Esophagus muscularis mucosa (tissue), 4 donors: ENCODE measurements at regions of chr4 and their contacts with region 1.

Region 1: GRCh38 chr4:159175085-159175988 is 72.5 kb downstream of the RAPGEF2 start:
- DNase-seq: no peak
- H3K4me3 ChIP-seq: peak overlapping the region in 3 of 4 donors; percentile 16 to 35 (median 27)
- H3K27ac ChIP-seq: peak overlapping the region in 3 of 4 donors; percentile 6 to 56 (median 56)
- H3K4me1 ChIP-seq: peaks cover 59 to 82% (median 69%) of the 10 kb centered on the region in 4 donors
- H3K27me3 ChIP-seq: no peaks in the 10 kb centered on the region
- CTCF ChIP-seq: peak; percentile 86 to 88 (median 88)
- EP300 ChIP-seq: no peak
- POLR2A ChIP-seq: no peak

Region 2: DNA sequence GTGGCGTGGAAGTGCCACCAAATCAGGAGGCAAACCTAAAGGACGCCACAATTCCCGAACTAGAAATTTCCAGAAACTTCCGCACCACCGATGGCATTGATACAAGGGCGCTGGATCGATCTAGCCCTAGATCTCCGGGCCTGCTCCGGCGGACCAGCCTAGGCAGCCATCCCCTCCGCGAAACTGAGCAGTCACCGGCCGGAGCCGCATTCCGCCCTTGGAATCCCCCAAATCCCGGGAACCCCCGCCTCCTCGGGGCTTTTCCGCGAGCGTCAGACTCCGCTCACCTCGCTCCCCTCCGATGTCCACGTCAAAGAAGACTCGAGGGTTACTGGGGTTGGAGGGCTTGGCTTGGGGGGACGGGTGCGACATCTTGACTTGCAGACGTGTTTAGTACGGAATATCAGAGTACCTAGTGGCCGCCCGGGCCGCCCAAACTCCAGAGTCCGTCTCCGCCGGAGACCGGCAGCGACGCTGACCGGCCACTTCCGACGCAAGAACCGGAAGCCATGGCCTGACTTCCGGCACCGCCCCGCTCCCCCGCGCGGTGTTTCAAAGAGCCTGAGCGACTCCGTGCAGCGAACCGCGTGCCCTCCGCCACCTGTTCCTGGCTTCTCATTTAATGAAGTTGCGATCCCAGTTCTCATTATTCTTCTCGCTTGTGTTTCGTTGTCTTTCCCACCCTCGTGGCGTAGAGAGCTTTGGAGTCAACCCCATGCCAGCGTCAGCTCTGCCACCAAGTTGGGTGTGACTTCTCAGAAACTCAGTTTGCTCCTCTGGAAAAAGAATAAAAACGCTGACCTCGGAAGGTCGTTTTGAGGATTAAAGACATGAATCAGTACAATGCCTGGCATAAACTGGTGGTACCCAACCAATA is 452.2 kb before region 1 on chr4 and contains the start of gene PPID:
- intact Hi-C with region 1: loop called (anchors 10 kb)
- DNase-seq: peak; percentile 95
- H3K4me3 ChIP-seq: peak within 1 kb of the TSS; percentile 79 to 91 (median 88)
- H3K27ac ChIP-seq: peak within 1 kb of the TSS; percentile 88 to 95 (median 91)
- H3K4me1 ChIP-seq: peaks cover 14 to 24% (median 20%) of the 10 kb centered on the region in 4 donors
- H3K27me3 ChIP-seq: no peaks in the 10 kb centered on the region
- CTCF ChIP-seq: no peak
- EP300 ChIP-seq: no peak
- POLR2A ChIP-seq: peak; percentile 36
- total RNA-seq, gene PPID: 17.1 to 29.0 (median 25.8) TPM

Region 3: DNA sequence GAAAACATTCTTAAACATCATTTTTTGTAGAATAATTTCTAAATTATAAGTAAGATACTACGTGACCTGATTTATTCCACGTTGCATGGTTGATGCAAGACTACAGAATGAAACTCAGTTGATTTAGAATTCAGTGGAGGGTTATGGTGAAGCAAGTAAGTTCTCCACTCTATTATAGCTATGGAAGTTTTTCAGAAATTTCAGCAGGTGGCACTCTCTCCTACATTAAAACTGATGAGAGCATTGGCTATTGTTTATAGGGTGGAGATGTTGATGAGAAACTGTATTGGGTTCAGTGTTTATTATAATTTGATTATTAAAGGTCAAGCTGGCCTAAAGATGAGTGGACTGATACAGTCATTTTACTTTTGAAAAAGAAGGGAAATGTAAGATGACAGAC is 318.5 kb before region 1 on chr4:
- intact Hi-C with region 1: loop called (anchors 2 kb)
- DNase-seq: no peak
- H3K4me3 ChIP-seq: no peak overlapping the region
- H3K27ac ChIP-seq: no peak overlapping the region
- H3K4me1 ChIP-seq: peaks cover 0 to 12% (median 7%) of the 10 kb centered on the region in 4 donors
- H3K27me3 ChIP-seq: no peaks in the 10 kb centered on the region
- CTCF ChIP-seq: peak; percentile 44 to 53 (median 51)
- EP300 ChIP-seq: no peak
- POLR2A ChIP-seq: no peak

Region 4: DNA sequence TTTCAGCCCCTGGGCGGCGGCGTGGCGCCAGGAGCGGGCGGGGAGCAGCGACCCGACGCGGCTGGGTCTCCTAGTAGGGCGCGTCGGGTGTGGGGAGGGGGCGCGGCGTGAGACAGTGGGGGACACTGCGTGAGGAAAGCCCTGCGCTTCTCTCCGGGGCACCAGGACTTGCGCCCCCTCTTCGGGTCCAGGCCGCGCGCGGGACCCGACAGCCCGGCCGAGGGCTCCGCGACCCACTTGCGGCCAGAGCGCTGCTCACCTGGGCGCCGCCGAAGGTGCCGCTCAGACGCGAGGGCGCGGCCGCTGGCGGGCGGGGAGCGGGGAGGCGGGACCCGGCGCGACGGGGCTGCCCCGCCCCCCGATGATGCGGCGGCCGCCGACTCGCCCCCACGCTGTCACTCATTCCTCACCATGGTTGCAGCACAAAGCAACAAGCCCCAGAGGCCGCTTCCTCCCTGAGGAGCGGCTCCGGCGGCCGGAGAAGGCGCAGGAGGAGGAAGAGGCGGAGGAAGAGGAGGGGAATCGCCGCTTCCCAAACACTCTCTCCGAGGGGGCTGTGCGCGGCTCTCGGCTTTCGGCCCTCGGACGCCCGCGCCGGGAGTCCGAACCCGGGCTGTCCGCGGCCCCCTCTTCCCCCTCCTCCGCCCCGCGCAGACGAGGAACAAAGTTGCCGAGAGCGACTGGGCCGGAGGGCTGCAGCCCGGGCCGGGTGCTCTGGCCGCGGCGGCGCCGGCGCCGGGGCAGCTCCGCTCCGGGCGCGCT is 72.5 kb before region 1 on chr4 and contains the start of gene RAPGEF2:
- intact Hi-C with region 1: loop called (anchors 2 kb)
- DNase-seq: peak; percentile 96
- H3K4me3 ChIP-seq: peak within 1 kb of the TSS; percentile 96 to 100 (median 100)
- H3K27ac ChIP-seq: peak within 1 kb of the TSS; percentile 96 to 98 (median 98)
- H3K4me1 ChIP-seq: peaks cover 16 to 48% (median 44%) of the 10 kb centered on the region in 4 donors
- H3K27me3 ChIP-seq: no peaks in the 10 kb centered on the region
- CTCF ChIP-seq: no peak
- EP300 ChIP-seq: no peak
- POLR2A ChIP-seq: peak; percentile 63
- total RNA-seq, gene RAPGEF2: 55.6 to 61.5 (median 58.4) TPM